ENCODE measurements at regions of chr6 and their contacts with region 1.

Region 1: GRCh38 chr6:18432180-18432579 is 45.0 kb downstream of the RNF144B start:
- DNase-seq: no peak
- H3K4me3 ChIP-seq: no peak overlapping the region
- H3K27ac ChIP-seq: no peak overlapping the region
- H3K4me1 ChIP-seq: no peaks in the 10 kb centered on the region
- H3K27me3 ChIP-seq: no peaks in the 10 kb centered on the region
- CTCF ChIP-seq: no peak

Region 2: GRCh38 chr6:18503593-18504231 is 71.5 kb after region 1 on chr6:
- intact Hi-C with region 1: loop called (anchors 5 kb)
- DNase-seq: peak in 1 of 2 donors; percentile 78
- H3K4me3 ChIP-seq: peak overlapping the region; percentile 32 to 55
- H3K27ac ChIP-seq: no peak overlapping the region
- H3K4me1 ChIP-seq: no peaks in the 10 kb centered on the region
- H3K27me3 ChIP-seq: no peaks in the 10 kb centered on the region
- CTCF ChIP-seq: peak; percentile 81 to 95 (median 93)

Measured in ascending aorta (tissue), 2 donors.